ENCODE measurements at regions of chr12 and their contacts with region 1.

Region 1: DNA sequence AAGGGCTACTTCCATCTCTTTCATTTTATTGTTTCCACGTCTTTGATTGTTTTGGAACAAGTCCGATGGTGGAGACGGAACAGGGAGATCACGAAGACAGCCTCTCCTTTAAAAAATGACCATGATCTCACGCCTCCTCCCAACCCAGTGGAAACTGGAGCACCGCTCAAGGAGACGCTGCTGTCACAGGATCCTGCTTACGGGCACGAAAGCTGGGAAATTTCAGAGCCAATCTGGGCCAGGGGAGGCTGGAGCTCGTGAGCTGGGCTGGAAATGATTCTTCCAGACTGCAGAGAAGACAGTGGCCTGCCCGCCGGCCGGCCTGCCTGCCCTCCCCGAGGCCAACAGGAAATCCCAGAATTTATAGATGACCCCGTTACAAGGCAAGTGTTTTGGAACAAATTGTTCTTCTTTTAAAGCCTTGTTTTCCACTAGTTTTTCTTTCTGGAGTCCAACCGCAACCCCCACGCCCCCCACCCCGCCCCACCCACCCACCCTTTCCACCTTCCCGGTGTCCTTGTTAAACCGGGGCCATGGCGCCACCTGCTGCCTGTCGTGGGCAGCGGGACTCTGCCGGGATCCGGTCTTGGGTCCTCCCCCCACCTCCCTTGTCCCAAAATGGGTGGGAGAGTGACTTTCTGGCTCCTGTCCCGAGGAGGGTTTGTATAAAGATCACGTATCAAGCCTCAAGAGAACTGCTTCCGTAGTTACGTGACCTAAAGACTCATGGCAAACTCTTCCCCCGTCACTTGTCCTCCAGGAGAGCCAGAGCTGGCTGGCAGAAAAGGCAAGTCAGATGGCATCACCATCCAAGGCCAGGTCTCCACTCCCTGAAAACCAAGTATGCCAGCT is 40.3 kb downstream of the MAP1LC3B2 start:
- DNase-seq: peak; percentile 71
- ATAC-seq: no peak
- H3K4me3 Mint-ChIP-seq: no peak overlapping the region
- H3K27ac Mint-ChIP-seq: no peak overlapping the region
- H3K4me1 Mint-ChIP-seq: peaks cover 15% of the 10 kb centered on the region
- H3K27me3 Mint-ChIP-seq: no peaks in the 10 kb centered on the region
- CTCF ChIP-seq: peak; percentile 59

Region 2: GRCh38 chr12:115998119-115998633 is 601.3 kb before region 1 on chr12:
- CTCF ChIA-PET with region 1: interaction called, 15 read pairs
- POLR2A ChIA-PET with region 1: no interaction called
- intact Hi-C with region 1: loop called (anchors 10 kb)
- DNase-seq: peak; percentile 14
- ATAC-seq: peak; percentile 66
- H3K4me3 Mint-ChIP-seq: no peak overlapping the region
- H3K27ac Mint-ChIP-seq: no peak overlapping the region
- H3K4me1 Mint-ChIP-seq: peaks cover 6% of the 10 kb centered on the region
- H3K27me3 Mint-ChIP-seq: no peaks in the 10 kb centered on the region
- CTCF ChIP-seq: peak; percentile 95

Region 3: GRCh38 chr12:116277393-116278278 is 321.9 kb before region 1 on chr12 and contains the start of gene MED13L:
- CTCF ChIA-PET with region 1: interaction called, 5 read pairs
- POLR2A ChIA-PET with region 1: no interaction called
- intact Hi-C with region 1: loop called (anchors 10 kb)
- DNase-seq: peak; percentile 81
- ATAC-seq: peak; percentile 84
- H3K4me3 Mint-ChIP-seq: peak within 1 kb of the TSS; percentile 82
- H3K27ac Mint-ChIP-seq: peak within 1 kb of the TSS; percentile 88
- H3K4me1 Mint-ChIP-seq: peaks cover 33% of the 10 kb centered on the region
- H3K27me3 Mint-ChIP-seq: no peaks in the 10 kb centered on the region
- CTCF ChIP-seq: peak; percentile 22
- total RNA-seq, gene MED13L: 39.5 to 41.8 TPM

Region 4: DNA sequence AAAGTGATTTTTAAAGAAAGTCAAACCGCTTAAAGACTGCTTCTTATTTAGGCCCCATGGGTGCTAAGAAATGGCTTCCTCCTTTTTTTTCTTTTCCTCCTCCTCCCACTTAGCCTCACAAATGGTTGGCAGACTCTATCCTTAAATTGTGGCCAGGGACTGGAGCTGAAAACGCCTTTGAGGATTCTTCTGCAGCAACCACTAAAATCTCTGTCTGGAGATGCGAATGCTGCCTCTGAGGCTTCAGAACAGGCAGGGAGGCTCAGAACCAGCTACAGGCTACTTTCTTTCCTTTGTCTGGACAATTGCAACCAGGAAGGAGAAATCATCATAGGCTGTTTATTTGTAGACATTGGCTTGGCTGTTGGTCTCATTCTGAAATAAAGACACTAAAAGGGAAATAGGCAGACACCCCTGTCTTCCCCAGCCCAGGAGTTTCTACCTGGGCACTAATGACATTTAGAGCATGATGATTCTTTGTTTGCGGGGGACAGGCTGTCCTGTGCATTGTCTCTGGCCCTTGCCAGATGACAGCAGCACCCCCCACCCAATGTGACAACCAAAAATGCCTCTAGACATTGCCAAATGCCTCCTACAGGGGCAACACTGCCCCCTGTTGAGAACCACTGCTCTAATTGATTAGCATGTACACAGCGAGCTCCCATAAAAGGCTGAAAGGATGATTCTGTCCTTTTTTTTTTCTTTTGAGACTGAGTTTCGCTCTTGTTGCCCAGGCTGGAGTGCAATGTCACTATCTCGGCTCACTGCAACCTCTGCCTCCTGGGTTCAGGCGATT is 10.0 kb after region 1 on chr12:
- CTCF ChIA-PET with region 1: interaction called, 10 read pairs
- POLR2A ChIA-PET with region 1: no interaction called
- intact Hi-C with region 1: no loop called
- DNase-seq: peak; percentile 64
- ATAC-seq: no peak
- H3K4me3 Mint-ChIP-seq: no peak overlapping the region
- H3K27ac Mint-ChIP-seq: no peak overlapping the region
- H3K4me1 Mint-ChIP-seq: no peaks in the 10 kb centered on the region
- H3K27me3 Mint-ChIP-seq: no peaks in the 10 kb centered on the region
- CTCF ChIP-seq: peak; percentile 61